Psoas muscle (tissue), 8 donors: ENCODE measurements at regions of chrX and their contacts with region 1.

Region 1: GRCh38 chrX:82961129-82961528 is 547.0 kb upstream of the POU3F4 start:
- DNase-seq: no peak
- ATAC-seq: no peak
- H3K4me3 ChIP-seq: no peak overlapping the region
- H3K27ac ChIP-seq: no peak overlapping the region
- H3K4me1 ChIP-seq: no peaks in the 10 kb centered on the region
- H3K27me3 ChIP-seq: peaks cover 0 to 7% (median 0%) of the 10 kb centered on the region in 3 donors
- CTCF ChIP-seq: no peak

Region 2: GRCh38 chrX:81875800-81876199 is 1085.3 kb before region 1 on chrX:
- intact Hi-C with region 1: no loop called
- DNase-seq: no peak
- ATAC-seq: no peak
- H3K4me3 ChIP-seq: no peak overlapping the region
- H3K27ac ChIP-seq: no peak overlapping the region
- H3K4me1 ChIP-seq: no peaks in the 10 kb centered on the region
- H3K27me3 ChIP-seq: no peaks in the 10 kb centered on the region
- CTCF ChIP-seq: no peak

Region 3: DNA sequence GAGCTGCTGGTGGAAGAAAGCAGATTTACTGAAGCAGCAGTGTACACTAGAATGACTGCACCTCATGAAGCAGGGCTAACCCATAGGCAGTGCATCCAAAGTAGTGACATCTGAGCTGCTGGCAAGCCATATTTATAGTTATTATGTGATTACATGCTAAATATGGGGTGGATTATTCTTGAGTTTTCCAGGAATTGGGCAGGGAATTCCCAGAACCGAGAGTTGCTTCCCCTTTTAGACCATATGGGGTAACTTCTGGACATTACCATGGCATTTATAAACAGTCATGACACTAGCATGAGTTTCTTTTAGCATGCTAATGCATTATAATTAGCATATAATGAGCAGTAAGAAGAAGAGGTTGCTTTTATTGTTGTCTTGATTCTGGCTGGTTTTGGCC is 118.8 kb before region 1 on chrX:
- intact Hi-C with region 1: loop called in 1 of 2 experiments (anchors 10 kb)
- DNase-seq: no peak
- ATAC-seq: peak in 1 of 4 donors; percentile 34
- H3K4me3 ChIP-seq: no peak overlapping the region
- H3K27ac ChIP-seq: no peak overlapping the region
- H3K4me1 ChIP-seq: no peaks in the 10 kb centered on the region
- H3K27me3 ChIP-seq: no peaks in the 10 kb centered on the region
- CTCF ChIP-seq: no peak

Region 4: DNA sequence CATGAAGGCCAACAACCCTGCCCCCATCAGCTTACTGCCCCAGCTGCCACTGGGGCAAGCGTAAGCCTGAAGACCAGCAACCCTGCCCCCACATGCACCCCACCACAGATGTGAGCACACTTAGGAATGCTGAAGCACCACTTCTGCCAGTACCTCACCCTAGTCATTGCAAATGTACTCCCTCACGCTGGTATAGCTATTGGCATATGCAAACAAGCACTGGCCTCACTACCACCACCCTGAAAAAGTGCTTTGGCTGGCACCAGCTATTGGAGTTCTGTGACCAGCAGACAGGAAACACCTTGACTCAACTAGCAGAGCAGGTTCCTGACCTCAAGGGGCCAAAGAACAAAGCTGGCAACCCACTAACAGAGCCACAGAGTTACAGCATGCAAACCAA is 12.5 kb after region 1 on chrX:
- intact Hi-C with region 1: no loop called
- DNase-seq: no peak
- ATAC-seq: no peak
- H3K4me3 ChIP-seq: no peak overlapping the region
- H3K27ac ChIP-seq: no peak overlapping the region
- H3K4me1 ChIP-seq: no peaks in the 10 kb centered on the region
- H3K27me3 ChIP-seq: peaks cover 0 to 5% (median 0%) of the 10 kb centered on the region in 3 donors
- CTCF ChIP-seq: no peak